ENCODE measurements at regions of chr1 and their contacts with region 1.

Region 1: DNA sequence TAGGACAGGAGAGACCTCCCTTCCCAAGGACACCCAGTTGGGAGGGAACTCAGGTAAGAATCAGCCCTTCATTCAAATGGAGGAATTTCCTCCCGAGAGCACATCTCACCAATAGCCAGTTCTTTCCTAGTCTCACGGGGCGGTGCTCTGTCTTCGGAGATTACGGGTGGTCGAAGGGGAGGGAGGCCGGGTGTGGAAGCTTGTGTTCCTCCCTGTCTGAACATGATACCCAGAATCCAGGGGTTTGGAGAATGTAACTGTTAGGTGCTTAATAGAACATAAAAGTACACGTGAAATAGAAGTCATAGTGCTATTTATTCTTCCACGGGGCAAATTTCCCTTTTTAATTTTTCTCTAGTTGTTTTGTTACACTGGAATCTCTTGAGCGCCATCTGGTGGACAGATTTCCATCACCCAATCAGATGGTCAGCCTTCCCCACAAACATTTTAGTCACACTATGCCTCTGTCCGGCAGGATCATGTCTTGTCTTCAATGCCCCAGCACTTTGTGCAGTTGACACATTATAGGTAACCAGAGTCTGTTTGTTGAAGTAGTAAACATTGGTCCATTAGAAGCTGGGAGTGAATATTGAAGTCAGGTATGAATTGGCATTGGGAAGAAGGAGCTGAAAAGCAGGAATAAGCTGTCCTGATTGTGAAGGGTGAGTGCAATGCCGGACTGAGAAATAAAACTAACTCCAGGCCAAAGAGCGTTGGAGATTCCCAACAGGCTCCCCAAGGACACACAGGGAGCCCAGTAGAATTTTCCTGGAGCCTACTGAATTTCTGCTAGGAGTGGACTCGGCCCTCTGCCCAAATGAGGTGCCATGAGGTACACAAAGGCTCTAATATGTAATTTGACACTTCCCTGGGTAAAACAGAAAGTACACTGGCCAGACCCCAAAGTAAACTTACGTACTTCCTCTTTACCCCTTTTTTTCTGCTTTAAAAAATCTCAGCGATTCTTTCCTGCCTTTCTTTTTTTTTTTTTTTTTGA is 27.6 kb upstream of the ZNF697 start:
- DNase-seq: peak; percentile 92
- H3K4me3 Mint-ChIP-seq: peak overlapping the region; percentile 67
- H3K27ac Mint-ChIP-seq: peak overlapping the region; percentile 28
- H3K4me1 Mint-ChIP-seq: peaks cover 21% of the 10 kb centered on the region
- H3K27me3 Mint-ChIP-seq: no peaks in the 10 kb centered on the region
- CTCF ChIP-seq: peak; percentile 77

Region 2: GRCh38 chr1:119409731-119410130 is 265.9 kb before region 1 on chr1:
- CTCF ChIA-PET with region 1: no interaction called
- POLR2A ChIA-PET with region 1: no interaction called
- intact Hi-C with region 1: no loop called
- DNase-seq: no peak
- H3K4me3 Mint-ChIP-seq: no peak overlapping the region
- H3K27ac Mint-ChIP-seq: no peak overlapping the region
- H3K4me1 Mint-ChIP-seq: no peaks in the 10 kb centered on the region
- H3K27me3 Mint-ChIP-seq: no peaks in the 10 kb centered on the region
- CTCF ChIP-seq: no peak

Region 3: GRCh38 chr1:119531624-119532323 is 143.9 kb before region 1 on chr1:
- CTCF ChIA-PET with region 1: no interaction called
- POLR2A ChIA-PET with region 1: no interaction called
- intact Hi-C with region 1: no loop called
- DNase-seq: no peak
- H3K4me3 Mint-ChIP-seq: no peak overlapping the region
- H3K27ac Mint-ChIP-seq: no peak overlapping the region
- H3K4me1 Mint-ChIP-seq: no peaks in the 10 kb centered on the region
- H3K27me3 Mint-ChIP-seq: peaks cover 62% of the 10 kb centered on the region
- CTCF ChIP-seq: no peak

Region 4: DNA sequence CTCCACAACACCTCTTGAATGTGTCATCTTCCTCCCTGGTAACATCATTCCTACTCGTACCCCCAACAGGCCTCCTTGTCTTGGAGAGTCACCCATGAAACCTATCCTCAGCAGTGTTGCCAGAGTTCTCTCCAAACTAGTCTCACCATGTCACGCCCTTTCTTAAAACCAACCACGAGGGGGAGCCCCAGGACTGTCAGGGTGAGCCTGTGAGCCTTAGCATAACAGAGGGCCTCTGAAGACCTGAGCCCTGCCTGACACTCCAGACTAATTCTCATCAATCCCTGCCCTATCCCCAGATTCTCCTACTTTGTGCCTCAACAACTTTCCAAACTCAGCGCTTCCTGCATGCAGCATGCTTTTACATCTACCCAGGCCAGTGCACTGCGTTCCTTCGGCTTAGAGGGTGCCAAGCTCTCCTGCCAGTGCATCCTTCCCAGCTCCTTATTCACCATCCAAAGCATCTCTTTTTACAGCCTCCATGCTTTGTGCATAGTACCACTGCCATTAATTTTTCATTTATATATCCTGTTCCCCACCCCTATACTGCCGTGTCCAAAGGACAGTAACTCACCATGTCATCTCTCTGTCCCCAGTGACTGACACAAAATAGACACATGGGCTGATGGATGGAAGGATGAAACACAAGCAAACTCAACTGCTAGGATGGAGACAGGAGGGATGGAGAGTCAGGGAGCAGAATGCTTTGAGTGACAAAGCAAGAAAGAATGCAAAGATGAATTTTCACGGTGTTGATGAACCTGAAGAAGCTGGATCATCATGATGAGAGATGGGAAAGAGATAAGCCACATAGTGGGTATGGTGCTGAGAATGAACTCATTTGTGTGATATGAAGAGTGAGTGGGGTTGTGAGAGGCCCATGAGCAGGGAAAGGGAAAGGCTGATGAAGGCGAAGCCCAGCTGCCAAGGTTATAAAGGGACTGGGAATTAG is 61.6 kb before region 1 on chr1:
- CTCF ChIA-PET with region 1: interaction called, 260 read pairs
- POLR2A ChIA-PET with region 1: interaction called, 19 read pairs
- intact Hi-C with region 1: loop called (anchors 1 kb)
- DNase-seq: peak; percentile 93
- H3K4me3 Mint-ChIP-seq: no peak overlapping the region
- H3K27ac Mint-ChIP-seq: no peak overlapping the region
- H3K4me1 Mint-ChIP-seq: peaks cover 5% of the 10 kb centered on the region
- H3K27me3 Mint-ChIP-seq: no peaks in the 10 kb centered on the region
- CTCF ChIP-seq: peak; percentile 90

Region 5: DNA sequence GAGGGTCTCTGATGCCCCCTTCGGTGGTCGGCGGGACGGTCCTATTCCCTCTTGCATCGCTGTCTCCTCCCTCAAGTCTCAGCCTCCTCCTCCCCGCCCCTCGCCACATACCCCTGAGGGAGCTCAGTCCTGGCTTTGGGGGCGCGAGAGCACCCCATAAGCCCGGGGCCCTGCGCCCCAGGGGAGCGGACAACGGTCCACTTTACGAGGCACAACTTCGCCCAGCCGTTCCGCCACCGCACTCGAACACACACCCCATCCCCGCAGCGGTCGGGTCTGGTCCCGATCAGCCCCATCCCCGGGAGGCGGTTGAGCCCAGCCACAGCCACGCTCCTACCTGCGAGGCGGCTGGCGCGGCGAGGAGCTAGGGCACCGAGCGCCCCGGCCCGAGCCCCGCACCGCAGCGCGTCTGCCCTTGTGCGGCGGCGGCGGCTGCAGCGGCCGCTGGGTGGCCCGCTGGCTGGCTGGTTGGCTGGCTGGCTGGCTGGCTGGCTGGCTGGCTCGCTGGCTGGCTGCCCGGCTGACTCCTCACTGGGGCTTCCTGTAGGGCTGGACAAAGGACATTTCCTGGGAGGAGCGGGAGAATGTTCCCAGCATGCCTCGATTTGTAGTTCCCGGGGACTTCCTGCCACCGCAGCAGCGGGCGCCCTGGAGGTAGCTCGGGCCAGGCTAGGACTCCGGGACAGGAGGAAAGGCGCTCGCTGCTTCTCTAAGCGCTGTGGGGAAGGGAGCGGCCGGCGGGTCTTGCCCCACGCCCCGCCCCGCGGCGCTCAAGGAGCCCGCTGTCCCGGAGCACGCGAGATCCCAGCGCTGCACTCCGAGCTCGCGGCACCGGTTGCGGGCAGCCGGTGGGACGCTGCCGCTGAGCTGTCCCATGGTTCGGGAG is 27.7 kb before region 1 on chr1 and contains the start of gene ZNF697:
- CTCF ChIA-PET with region 1: interaction called, 51 read pairs
- POLR2A ChIA-PET with region 1: interaction called, 161 read pairs
- intact Hi-C with region 1: no loop called
- DNase-seq: peak; percentile 97
- H3K4me3 Mint-ChIP-seq: peak within 1 kb of the TSS; percentile 84
- H3K27ac Mint-ChIP-seq: peak within 1 kb of the TSS; percentile 90
- H3K4me1 Mint-ChIP-seq: peaks cover 51% of the 10 kb centered on the region
- H3K27me3 Mint-ChIP-seq: peaks cover 14% of the 10 kb centered on the region
- CTCF ChIP-seq: no peak
- total RNA-seq, gene ZNF697: 12.2 and 13.2 TPM in 2 replicates

Region 6: GRCh38 chr1:119662034-119662437 is 13.6 kb before region 1 on chr1:
- CTCF ChIA-PET with region 1: interaction called, 54 read pairs
- POLR2A ChIA-PET with region 1: interaction called, 161 read pairs
- intact Hi-C with region 1: no loop called
- DNase-seq: no peak
- H3K4me3 Mint-ChIP-seq: no peak overlapping the region
- H3K27ac Mint-ChIP-seq: no peak overlapping the region
- H3K4me1 Mint-ChIP-seq: peaks cover 6% of the 10 kb centered on the region
- H3K27me3 Mint-ChIP-seq: peaks cover 11% of the 10 kb centered on the region
- CTCF ChIP-seq: no peak

Region 7: GRCh38 chr1:119711804-119712341 is 36.2 kb after region 1 on chr1 and contains the start of gene PHGDH:
- CTCF ChIA-PET with region 1: interaction called, 4 read pairs
- POLR2A ChIA-PET with region 1: interaction called, 15 read pairs
- intact Hi-C with region 1: no loop called
- DNase-seq: peak; percentile 92
- H3K4me3 Mint-ChIP-seq: peak within 1 kb of the TSS; percentile 90
- H3K27ac Mint-ChIP-seq: peak within 1 kb of the TSS; percentile 86
- H3K4me1 Mint-ChIP-seq: peaks cover 23% of the 10 kb centered on the region
- H3K27me3 Mint-ChIP-seq: no peaks in the 10 kb centered on the region
- CTCF ChIP-seq: no peak
- total RNA-seq, gene PHGDH: 165 and 198 TPM in 2 replicates